Kidney (tissue), 22 donors: ENCODE measurements at regions of chr17 and their contacts with region 1.

Region 1: GRCh38 chr17:43576563-43577229 is 30.6 kb upstream of the ETV4 start:
- DNase-seq: peak; percentile 82 to 92 (median 90)
- H3K4me3 ChIP-seq: no peak overlapping the region
- H3K27ac ChIP-seq: no peak overlapping the region
- H3K4me1 ChIP-seq: peaks cover 0 to 5% (median 4%) of the 10 kb centered on the region in 3 donors
- H3K27me3 ChIP-seq: no peaks in the 10 kb centered on the region
- CTCF ChIP-seq: peak; percentile 95

Region 2: DNA sequence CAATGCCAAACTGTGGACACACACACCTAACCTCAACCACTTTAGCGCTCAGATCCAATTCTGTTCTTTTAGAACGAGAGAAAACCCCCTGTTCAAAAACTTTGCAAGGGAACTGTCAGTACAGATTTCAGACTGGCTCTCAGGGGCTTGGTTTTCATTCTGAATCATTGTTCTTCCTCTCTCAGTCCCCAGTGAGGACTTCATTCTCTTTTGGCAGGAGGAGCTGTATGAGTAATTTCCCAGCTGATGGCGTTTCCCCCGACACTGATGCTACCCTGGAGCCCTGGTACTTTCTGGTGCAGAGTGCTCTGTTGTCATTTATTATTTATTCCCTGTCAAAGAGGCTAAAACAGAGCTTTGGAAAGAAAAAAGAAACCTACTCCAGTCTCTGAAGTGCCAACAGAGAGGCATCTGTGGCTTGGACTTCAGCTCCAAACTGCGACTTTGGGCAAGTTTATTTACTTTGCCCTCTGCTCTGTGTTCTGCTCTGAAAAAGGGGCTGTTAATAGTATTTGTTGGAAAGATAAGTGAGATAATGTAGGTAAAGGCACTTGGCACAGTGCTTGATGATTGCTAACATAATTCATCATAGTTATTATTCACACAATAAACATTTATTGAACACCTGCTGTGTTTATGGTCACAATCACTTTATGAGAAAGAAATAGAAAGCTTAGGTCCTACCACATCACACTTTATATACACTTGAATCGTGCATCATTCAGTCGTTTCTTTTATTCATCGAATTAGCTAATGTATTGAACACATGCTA is 58.9 kb before region 1 on chr17:
- intact Hi-C with region 1: loop called (anchors 10 kb)
- DNase-seq: no peak
- H3K4me3 ChIP-seq: no peak overlapping the region
- H3K27ac ChIP-seq: no peak overlapping the region
- H3K4me1 ChIP-seq: no peaks in the 10 kb centered on the region
- H3K27me3 ChIP-seq: no peaks in the 10 kb centered on the region
- CTCF ChIP-seq: no peak